Activated CD8-positive, alpha-beta memory T cell treated with anti-CD3 and anti-CD28 coated beads, Interleukin-2, amount 10 ng/mL, durations not matched to agents 7 days and 5 days (primary cell): ENCODE measurements at regions of chr20 and their contacts with region 1.

Region 1: DNA sequence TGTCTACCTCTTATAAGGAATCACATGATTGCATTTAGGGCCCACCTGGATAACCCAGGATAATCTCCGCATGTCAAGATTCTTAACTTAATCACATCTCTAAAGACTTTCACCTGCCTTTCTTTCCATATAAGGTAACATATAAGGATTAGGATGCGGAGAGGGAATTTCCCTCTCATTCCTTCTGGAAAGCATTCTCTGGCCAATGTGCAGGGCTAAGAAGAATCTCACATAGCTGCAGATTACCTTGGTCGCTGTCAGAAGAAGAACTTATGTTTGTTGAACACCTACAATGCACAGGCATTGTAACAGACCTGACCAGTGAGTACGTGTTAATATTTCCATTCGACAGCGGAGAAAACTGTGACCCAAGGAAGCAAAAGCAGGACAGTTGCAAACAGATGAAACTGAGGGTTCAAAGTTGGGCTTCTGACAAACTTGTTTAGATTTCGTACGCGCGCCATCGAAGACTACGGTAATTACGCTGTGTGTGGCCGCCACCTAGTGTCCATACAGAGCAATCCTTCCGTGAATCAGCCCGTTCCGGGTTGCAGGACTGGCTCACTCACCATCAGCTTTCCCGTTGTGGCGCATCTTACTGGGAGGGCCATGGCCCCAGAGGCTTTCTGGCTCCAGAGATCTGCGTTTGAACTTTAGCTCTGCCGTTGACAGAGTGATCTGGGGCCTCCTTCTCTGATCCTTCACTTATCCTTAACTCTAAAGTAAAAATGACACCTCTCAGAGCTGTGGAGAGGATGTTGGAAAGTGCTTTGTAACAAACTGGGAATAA is 9.5 kb downstream of the C20orf202 start:
- DNase-seq: peak; percentile 83
- ATAC-seq: peak; percentile 96
- H3K4me3 Mint-ChIP-seq: no peak overlapping the region
- H3K27ac Mint-ChIP-seq: no peak overlapping the region
- H3K4me1 Mint-ChIP-seq: peaks cover 31% of the 10 kb centered on the region
- H3K27me3 Mint-ChIP-seq: peaks cover 21% of the 10 kb centered on the region

Region 2: DNA sequence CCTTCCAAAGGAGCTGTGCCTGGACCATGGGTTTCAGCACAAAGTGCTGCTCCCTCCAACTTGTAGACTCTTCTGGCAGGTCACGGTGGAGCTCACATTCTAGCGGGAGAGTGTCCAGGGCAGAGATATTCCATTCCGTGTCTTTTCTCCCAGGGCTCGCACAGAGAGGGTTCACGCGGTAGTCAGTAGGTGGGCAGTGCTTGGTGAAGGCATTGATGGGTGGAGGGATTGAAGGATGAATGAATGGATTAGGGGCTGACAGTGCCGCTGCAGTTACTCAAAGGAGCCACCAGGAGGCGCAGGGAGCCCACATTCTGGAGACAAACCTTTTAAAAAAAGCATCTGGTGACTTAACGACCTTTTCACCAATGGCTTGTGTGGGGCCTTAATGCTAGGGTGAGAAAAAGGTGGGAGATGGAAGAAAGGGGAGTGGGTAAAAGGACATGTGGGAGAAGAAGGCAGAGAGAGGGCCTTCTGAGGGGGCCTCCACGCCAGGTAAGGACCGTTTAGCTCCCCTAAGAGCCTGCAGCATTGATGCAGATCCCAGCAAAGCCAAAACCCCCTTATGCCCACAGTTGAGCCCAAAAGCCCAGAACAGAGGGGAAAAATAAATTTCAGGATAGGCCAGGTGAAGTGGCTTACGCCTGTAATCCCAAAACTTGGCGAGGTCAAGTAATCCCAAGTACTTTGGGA is 396.7 kb before region 1 on chr20:
- CTCF ChIA-PET with region 1: interaction called, 13 read pairs
- DNase-seq: peak; percentile 70
- ATAC-seq: peak; percentile 48
- H3K4me3 Mint-ChIP-seq: no peak overlapping the region
- H3K27ac Mint-ChIP-seq: no peak overlapping the region
- H3K4me1 Mint-ChIP-seq: peaks cover 5% of the 10 kb centered on the region
- H3K27me3 Mint-ChIP-seq: peaks cover 5% of the 10 kb centered on the region

Region 3: GRCh38 chr20:1108437-1108920 is 104.3 kb before region 1 on chr20:
- CTCF ChIA-PET with region 1: interaction called, 44 read pairs
- DNase-seq: peak; percentile 65
- ATAC-seq: peak; percentile 75
- H3K4me3 Mint-ChIP-seq: no peak overlapping the region
- H3K27ac Mint-ChIP-seq: no peak overlapping the region
- H3K4me1 Mint-ChIP-seq: peaks cover 3% of the 10 kb centered on the region
- H3K27me3 Mint-ChIP-seq: no peaks in the 10 kb centered on the region

Region 4: GRCh38 chr20:1225263-1225782 is 12.5 kb after region 1 on chr20:
- CTCF ChIA-PET with region 1: interaction called, 10 read pairs
- DNase-seq: no peak
- ATAC-seq: peak; percentile 54
- H3K4me3 Mint-ChIP-seq: peak overlapping the region; percentile 55
- H3K27ac Mint-ChIP-seq: no peak overlapping the region
- H3K4me1 Mint-ChIP-seq: peaks cover 13% of the 10 kb centered on the region
- H3K27me3 Mint-ChIP-seq: peaks cover 52% of the 10 kb centered on the region